Sigmoid colon (tissue), 7 donors: ENCODE measurements at regions of chr1 and their contacts with region 1.

Region 1: DNA sequence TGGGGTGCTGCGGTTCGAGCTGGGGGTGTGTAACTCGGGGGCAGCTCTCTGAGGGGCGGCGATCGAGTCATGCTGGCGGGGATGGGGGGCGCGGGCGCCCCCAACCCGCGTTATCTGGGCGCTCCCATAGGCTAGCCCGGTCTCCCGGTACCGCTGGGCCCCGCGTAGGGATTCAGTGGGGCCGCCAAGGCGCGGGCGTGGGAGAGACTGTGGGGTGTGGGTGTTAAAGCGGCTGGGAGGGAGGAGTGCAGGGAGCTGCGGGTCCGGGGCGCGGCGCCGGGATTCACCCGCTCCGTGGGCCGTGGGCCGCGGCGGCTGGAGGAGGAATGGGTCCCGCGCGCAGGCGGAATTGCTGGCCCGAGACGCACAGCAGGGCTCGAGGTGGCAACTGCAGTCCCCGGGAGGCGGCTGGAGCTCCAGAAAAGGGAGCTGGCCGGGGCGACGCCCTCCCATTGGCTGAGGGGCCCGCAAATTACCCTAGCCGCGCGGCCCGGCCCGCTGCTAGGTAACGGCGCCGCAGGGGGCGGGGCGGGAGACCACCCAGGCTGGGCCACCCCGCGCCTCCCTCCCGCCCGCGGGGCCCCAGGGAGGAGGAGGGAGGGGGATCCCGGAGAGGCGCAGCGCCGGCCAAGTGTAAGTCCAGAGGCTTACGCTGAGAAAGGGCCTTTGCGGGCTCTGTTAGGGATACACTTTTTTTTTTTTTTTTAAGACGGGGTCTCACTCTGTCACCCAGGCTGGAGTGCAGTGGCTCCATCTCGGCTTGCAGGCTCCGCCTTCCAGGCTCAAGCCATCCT is at the start of gene PTCH2:
- DNase-seq: peak; percentile 93
- H3K4me3 ChIP-seq: peak within 1 kb of the TSS; percentile 54 to 77 (median 60)
- H3K27ac ChIP-seq: peak within 1 kb of the TSS; percentile 66 to 82 (median 76)
- H3K4me1 ChIP-seq: peaks cover 0 to 18% (median 6%) of the 10 kb centered on the region in 4 donors
- H3K27me3 ChIP-seq: no peaks in the 10 kb centered on the region
- CTCF ChIP-seq: no peak
- EP300 ChIP-seq: no peak
- POLR2A ChIP-seq: peak in 1 of 2 donors; percentile 17
- total RNA-seq, gene PTCH2: 0.36 to 2.8 (median 0.83) TPM

Region 2: DNA sequence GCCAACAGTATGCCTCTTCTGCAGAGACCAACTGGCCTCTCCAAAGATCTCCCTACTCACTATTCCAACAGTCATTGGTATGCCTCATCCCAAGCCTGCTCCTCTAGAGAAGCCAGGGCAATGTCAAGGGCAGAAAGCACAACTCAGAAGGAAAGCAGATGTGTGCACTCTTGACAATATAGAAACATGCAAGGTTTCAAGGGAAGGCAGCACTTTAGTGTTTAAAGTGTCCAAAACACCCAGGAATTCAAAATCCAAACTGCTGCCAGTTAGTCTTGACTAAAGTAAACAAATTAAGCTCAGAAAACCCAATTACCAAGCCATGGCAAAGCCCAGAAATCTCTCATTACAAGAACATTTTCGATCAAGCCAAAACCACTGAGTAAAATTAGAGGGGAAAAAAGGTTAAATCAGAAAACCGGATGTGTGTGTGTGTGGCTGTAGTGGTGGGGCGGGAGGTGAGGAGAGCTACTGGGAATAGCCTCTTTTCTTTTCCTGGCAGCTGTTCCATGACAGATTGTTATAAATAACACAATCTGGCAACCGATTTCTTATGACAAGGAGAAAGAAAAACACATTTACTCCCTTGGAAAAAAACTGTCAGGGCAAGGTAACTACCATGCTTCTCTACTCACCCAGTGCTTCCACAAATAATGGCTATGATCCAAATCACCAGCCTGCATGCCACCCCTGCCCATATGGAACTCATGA is 104.2 kb after region 1 on chr1:
- intact Hi-C with region 1: no loop called
- DNase-seq: no peak
- H3K4me3 ChIP-seq: no peak overlapping the region
- H3K27ac ChIP-seq: peak overlapping the region; percentile 52 to 74 (median 66)
- H3K4me1 ChIP-seq: peaks cover 0 to 27% (median 22%) of the 10 kb centered on the region in 4 donors
- H3K27me3 ChIP-seq: no peaks in the 10 kb centered on the region
- CTCF ChIP-seq: no peak
- EP300 ChIP-seq: no peak
- POLR2A ChIP-seq: no peak

Region 3: GRCh38 chr1:44985747-44986359 is 142.8 kb after region 1 on chr1:
- intact Hi-C with region 1: loop called (anchors 5 kb)
- DNase-seq: no peak
- H3K4me3 ChIP-seq: peak overlapping the region; percentile 61 to 82 (median 64)
- H3K27ac ChIP-seq: peak overlapping the region; percentile 68 to 78 (median 72)
- H3K4me1 ChIP-seq: peaks cover 0 to 25% (median 17%) of the 10 kb centered on the region in 4 donors
- H3K27me3 ChIP-seq: no peaks in the 10 kb centered on the region
- CTCF ChIP-seq: no peak
- EP300 ChIP-seq: no peak
- POLR2A ChIP-seq: no peak